Mammary epithelial cell (primary cell): ENCODE measurements at regions of chr1 and their contacts with region 1.

Region 1: GRCh38 chr1:218339267-218339831 is 5.8 kb upstream of the TGFB2 start:
- DNase-seq: peak; percentile 30
- H3K4me3 ChIP-seq: no peak overlapping the region
- H3K27ac ChIP-seq: no peak overlapping the region
- H3K4me1 ChIP-seq: no peaks in the 10 kb centered on the region
- H3K27me3 ChIP-seq: no peaks in the 10 kb centered on the region
- CTCF ChIP-seq: peak; percentile 71 to 78

Region 2: DNA sequence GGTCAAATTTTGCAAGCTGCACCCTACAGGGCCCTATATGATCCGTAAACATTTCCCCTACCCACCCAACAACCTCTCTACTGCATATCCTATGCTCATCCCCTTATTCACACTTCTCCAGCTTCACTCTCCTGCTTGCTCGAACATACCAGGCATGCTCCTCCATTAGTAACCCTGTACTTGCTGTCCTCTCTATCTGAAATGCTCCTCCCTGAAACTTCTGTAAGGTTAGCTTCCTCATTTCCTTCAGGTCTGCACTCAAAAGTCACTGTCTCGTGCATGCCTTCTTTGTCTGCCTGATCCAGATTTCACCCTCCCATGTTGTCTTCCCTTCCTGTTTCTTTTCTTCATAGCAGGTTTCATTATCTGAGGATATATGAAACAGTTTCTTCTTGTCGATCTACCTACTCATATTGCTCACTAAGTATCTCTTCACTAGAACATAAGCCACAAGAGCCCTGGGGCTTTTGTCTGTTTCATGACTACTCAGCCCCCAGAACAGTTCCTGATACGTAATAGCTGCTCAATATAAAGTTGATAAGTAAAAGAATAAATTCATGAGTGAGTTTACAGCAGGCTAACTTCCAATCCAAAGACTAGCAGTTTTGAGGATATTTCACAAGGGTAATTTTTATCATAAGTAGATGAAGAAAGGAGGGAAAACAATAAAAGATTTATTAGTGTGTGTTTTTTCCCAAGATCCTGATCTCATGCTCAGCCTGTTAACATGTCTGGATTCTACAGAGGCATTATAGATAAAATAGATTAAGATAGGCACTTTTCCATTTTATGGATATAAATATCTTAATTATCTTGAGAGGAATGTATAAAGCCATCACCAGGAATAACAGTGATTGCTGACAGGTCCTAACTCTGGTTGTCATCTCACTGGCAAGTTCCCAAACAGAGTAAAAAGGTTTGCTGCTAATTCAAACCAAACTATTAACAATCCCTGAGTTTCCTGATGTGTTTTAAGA is 1223.7 kb before region 1 on chr1:
- CTCF ChIA-PET with region 1: no interaction called
- dilution Hi-C with region 1: no loop called
- in situ Hi-C with region 1: no loop called
- intact Hi-C with region 1: no loop called
- DNase-seq: peak; percentile 19
- H3K4me3 ChIP-seq: no peak overlapping the region
- H3K27ac ChIP-seq: no peak overlapping the region
- H3K4me1 ChIP-seq: no peaks in the 10 kb centered on the region
- H3K27me3 ChIP-seq: no peaks in the 10 kb centered on the region
- CTCF ChIP-seq: no peak

Region 3: DNA sequence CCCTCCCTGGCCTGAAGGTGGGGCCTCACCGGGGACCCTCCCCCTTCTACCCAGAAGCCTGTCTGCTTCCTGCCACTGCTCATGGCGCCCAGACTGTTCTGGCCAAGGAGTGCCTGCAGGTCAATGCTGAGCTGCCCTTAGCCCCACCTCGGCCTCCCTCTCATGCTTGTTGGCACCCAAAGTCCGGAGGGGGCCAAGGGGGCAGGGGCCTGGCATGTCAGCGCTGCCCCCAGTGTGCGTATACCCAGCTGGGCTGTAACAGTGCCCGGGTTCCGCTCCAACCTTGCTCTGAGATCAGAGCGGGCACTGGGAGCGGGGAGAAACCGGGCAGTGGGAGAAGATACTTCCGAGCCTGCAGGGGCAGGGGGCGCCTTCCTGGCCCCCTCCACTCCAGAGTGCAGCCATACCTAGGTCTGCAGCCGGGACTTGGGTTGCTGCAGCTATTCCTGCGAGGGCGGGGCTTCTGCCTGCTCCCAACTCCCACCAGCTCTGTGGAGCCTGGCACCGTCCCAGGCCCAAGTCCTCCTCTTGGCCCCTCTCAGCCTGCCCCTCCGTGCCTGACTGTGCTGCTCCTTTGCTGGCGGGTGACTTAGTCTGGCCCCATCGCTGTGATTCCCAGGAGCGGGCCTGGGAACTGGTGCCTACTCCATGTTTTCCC is 15.7 kb before region 1 on chr1:
- CTCF ChIA-PET with region 1: no interaction called
- dilution Hi-C with region 1: no loop called
- in situ Hi-C with region 1: no loop called
- intact Hi-C with region 1: no loop called
- DNase-seq: no peak
- H3K4me3 ChIP-seq: no peak overlapping the region
- H3K27ac ChIP-seq: no peak overlapping the region
- H3K4me1 ChIP-seq: no peaks in the 10 kb centered on the region
- H3K27me3 ChIP-seq: no peaks in the 10 kb centered on the region
- CTCF ChIP-seq: no peak

Region 4: DNA sequence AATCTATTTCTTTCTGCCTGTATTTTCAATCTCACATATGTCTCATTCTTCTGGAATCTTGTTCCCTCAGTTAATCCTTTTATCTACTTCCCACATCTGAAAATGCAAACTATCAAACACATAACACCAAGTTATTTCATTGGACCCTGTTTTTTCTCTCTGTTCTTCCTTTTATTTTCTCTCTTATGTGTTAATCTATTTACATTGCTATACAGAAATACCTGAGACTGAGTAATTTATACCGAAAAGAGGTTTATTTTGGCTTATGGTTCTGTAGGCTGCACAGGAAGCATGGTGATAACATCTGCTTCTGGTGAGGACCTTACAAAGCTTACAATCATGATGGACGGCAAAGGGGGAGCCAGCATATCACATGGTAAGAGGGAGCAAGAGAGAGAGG is 253.3 kb after region 1 on chr1:
- CTCF ChIA-PET with region 1: no interaction called
- dilution Hi-C with region 1: no loop called
- in situ Hi-C with region 1: no loop called
- intact Hi-C with region 1: loop called (anchors 2 kb)
- DNase-seq: peak; percentile 57
- H3K4me3 ChIP-seq: no peak overlapping the region
- H3K27ac ChIP-seq: no peak overlapping the region
- H3K4me1 ChIP-seq: peaks cover 8% of the 10 kb centered on the region
- H3K27me3 ChIP-seq: no peaks in the 10 kb centered on the region
- CTCF ChIP-seq: no peak